Heart right ventricle (tissue), 16 donors: ENCODE measurements at regions of chr17 and their contacts with region 1.

Region 1: GRCh38 chr17:61837175-61838051 is 25.9 kb downstream of the BRIP1 start:
- DNase-seq: peak; percentile 19 to 24
- ATAC-seq: no peak
- H3K4me3 ChIP-seq: no peak overlapping the region
- H3K27ac ChIP-seq: no peak overlapping the region
- H3K4me1 ChIP-seq: no peaks in the 10 kb centered on the region
- H3K27me3 ChIP-seq: no peaks in the 10 kb centered on the region
- CTCF ChIP-seq: peak in 8 of 9 donors; percentile 24 to 81 (median 69)

Region 2: DNA sequence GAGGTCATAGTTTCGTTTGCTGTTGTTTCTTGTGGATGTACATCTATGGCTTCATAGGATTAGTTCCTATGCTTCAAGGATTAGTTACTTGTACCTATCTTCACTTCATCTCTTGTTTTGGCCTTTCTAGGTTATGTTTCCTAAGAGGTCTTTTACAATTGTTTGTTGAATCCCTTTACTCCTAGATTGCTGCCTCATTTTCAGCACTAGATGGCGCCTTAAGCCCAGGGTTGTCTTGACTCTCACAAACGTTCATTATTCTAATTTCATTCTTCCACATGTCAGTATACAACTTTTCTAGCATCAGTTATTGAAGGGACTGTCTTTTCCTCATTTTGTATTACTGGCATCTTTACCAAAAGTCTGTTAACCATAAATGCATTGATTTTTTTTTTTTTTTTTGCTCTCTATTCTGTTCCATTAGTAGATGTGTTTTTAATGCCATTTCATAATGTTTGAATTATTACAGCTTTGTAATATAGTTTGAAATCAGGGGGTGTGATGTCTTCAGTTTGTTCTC is 201.4 kb before region 1 on chr17:
- intact Hi-C with region 1: loop called in 2 of 10 experiments (anchors 10 kb)
- DNase-seq: no peak
- ATAC-seq: no peak
- H3K4me3 ChIP-seq: no peak overlapping the region
- H3K27ac ChIP-seq: no peak overlapping the region
- H3K4me1 ChIP-seq: no peaks in the 10 kb centered on the region
- H3K27me3 ChIP-seq: peaks cover 0 to 10% (median 0%) of the 10 kb centered on the region in 7 donors
- CTCF ChIP-seq: peak in 7 of 9 donors; percentile 23 to 68 (median 47)

Region 3: DNA sequence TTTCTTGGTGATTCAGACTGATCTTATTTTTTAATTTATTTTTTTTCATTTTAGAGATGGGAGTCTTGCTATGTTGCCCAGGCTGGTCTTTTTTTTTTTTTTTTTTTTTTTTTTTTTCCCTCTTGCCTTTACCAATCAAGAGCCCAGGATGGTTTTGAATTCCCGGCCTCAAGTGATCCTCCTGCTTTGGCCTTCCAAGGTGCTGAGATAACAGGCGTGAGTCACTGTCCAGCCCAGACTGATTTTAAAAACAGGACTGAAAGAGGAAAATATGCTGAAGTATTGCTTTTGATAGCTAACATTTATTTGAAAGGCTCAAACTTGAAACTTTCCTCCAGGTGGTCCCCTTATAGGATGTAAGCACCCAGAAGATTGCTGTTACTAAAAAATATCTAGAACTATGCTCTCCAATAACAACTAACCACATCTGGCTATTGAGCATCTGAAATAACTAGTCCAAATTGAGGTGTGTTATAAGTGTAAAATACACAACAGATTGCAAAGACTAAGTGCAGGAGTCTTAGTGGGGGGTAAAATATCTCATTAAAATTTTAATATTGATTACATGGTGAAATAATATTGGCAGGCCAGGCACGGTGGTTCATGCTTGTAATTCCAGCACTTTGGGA is 41.7 kb after region 1 on chr17:
- intact Hi-C with region 1: no loop called
- DNase-seq: no peak
- ATAC-seq: no peak
- H3K4me3 ChIP-seq: no peak overlapping the region
- H3K27ac ChIP-seq: no peak overlapping the region
- H3K4me1 ChIP-seq: no peaks in the 10 kb centered on the region
- H3K27me3 ChIP-seq: no peaks in the 10 kb centered on the region
- CTCF ChIP-seq: no peak